ENCODE measurements at regions of chr17 and their contacts with region 1.

Region 1: GRCh38 chr17:53032861-53033271 is 789.9 kb upstream of the KIF2B start:
- DNase-seq: peak; percentile 88
- H3K4me3 ChIP-seq: no peak overlapping the region
- H3K27ac ChIP-seq: no peak overlapping the region
- H3K4me1 ChIP-seq: peaks cover 4% of the 10 kb centered on the region
- H3K27me3 ChIP-seq: no peaks in the 10 kb centered on the region
- CTCF ChIP-seq: peak; percentile 62 to 73
- POLR2A ChIP-seq: no peak

Region 2: GRCh38 chr17:51764387-51764972 is 1268.4 kb before region 1 on chr17:
- CTCF ChIA-PET with region 1: no interaction called
- POLR2A ChIA-PET with region 1: no interaction called
- dilution Hi-C with region 1: no loop called
- intact Hi-C with region 1: loop called (anchors 5 kb)
- DNase-seq: peak; percentile 36
- H3K4me3 ChIP-seq: no peak overlapping the region
- H3K27ac ChIP-seq: no peak overlapping the region
- H3K4me1 ChIP-seq: no peaks in the 10 kb centered on the region
- H3K27me3 ChIP-seq: no peaks in the 10 kb centered on the region
- CTCF ChIP-seq: peak; percentile 72 to 75
- POLR2A ChIP-seq: no peak

Region 3: DNA sequence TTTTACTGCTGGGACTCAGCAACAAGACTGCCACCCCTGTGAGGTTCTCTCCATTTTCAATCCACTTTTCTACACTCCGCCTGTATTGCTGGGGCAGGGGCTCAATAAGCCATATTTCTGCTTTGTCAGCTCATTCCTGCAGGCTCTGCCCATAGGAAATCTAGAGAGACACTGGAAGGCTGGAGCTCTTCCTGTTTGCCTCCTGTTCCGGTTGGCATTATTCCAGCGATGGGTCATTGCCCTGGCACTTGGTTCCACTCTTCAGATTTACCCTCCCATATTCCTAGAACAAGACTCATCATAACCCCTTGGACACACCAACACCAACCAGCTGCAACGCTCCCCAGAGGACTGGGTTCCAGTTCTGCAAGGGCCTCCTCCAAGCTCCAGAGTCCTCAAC is 1084.7 kb before region 1 on chr17:
- CTCF ChIA-PET with region 1: no interaction called
- POLR2A ChIA-PET with region 1: no interaction called
- dilution Hi-C with region 1: no loop called
- intact Hi-C with region 1: no loop called
- DNase-seq: no peak
- H3K4me3 ChIP-seq: no peak overlapping the region
- H3K27ac ChIP-seq: no peak overlapping the region
- H3K4me1 ChIP-seq: no peaks in the 10 kb centered on the region
- H3K27me3 ChIP-seq: no peaks in the 10 kb centered on the region
- CTCF ChIP-seq: no peak
- POLR2A ChIP-seq: no peak

Region 4: GRCh38 chr17:52776234-52776633 is 256.6 kb before region 1 on chr17:
- CTCF ChIA-PET with region 1: no interaction called
- POLR2A ChIA-PET with region 1: no interaction called
- dilution Hi-C with region 1: no loop called
- intact Hi-C with region 1: no loop called
- DNase-seq: no peak
- H3K4me3 ChIP-seq: no peak overlapping the region
- H3K27ac ChIP-seq: no peak overlapping the region
- H3K4me1 ChIP-seq: peaks cover 6% of the 10 kb centered on the region
- H3K27me3 ChIP-seq: no peaks in the 10 kb centered on the region
- CTCF ChIP-seq: no peak
- POLR2A ChIP-seq: no peak

Region 5: GRCh38 chr17:53150101-53150698 is 117.3 kb after region 1 on chr17:
- CTCF ChIA-PET with region 1: interaction called, 4 read pairs
- POLR2A ChIA-PET with region 1: no interaction called
- dilution Hi-C with region 1: no loop called
- intact Hi-C with region 1: loop called (anchors 1 kb)
- DNase-seq: no peak
- H3K4me3 ChIP-seq: no peak overlapping the region
- H3K27ac ChIP-seq: no peak overlapping the region
- H3K4me1 ChIP-seq: no peaks in the 10 kb centered on the region
- H3K27me3 ChIP-seq: no peaks in the 10 kb centered on the region
- CTCF ChIP-seq: peak in 1 of 2 donors; percentile 35
- POLR2A ChIP-seq: no peak

Region 6: DNA sequence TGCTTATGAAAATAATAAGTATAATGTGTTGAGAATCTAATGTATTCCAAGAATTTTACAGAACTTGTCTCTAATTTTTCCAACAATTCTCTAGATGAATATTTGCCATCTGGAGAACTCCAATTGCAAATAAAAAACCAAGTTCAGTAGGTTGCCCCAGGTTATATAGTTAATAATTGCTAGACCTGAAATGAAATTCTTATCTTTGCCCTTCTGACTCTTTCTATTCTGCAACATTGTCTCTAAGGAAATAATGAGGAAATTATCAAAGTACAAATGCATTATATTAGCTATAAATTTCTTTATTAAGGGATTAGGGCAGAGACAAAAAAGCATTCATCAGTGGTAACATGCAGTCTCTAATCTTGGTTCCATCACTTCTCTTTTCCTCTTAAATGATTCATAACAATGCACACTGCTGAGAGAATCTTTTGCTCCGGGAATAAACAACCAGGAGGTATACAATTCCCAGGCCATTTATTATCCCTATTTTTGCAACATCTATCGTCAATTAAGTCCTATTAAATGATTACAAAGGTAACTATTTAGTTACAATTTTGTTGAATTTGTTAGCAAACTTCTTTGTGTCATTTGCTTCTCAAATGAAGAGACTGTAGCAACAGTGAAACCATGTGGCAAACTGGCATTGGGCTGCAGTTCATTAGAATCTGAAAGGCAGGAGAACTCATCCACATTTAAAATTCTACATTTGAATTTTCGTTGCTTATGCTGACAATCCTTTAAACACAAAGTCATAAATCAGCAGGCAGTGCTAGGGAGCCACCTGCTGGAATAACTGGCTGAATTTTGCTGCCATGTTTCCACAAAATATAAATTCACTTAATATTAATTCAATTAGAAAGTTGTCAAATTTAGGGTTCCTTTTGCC is 1139.5 kb after region 1 on chr17:
- CTCF ChIA-PET with region 1: no interaction called
- POLR2A ChIA-PET with region 1: no interaction called
- dilution Hi-C with region 1: no loop called
- intact Hi-C with region 1: loop called (anchors 2 kb)
- DNase-seq: no peak
- H3K4me3 ChIP-seq: no peak overlapping the region
- H3K27ac ChIP-seq: no peak overlapping the region
- H3K4me1 ChIP-seq: no peaks in the 10 kb centered on the region
- H3K27me3 ChIP-seq: no peaks in the 10 kb centered on the region
- CTCF ChIP-seq: no peak
- POLR2A ChIP-seq: no peak

Region 7: DNA sequence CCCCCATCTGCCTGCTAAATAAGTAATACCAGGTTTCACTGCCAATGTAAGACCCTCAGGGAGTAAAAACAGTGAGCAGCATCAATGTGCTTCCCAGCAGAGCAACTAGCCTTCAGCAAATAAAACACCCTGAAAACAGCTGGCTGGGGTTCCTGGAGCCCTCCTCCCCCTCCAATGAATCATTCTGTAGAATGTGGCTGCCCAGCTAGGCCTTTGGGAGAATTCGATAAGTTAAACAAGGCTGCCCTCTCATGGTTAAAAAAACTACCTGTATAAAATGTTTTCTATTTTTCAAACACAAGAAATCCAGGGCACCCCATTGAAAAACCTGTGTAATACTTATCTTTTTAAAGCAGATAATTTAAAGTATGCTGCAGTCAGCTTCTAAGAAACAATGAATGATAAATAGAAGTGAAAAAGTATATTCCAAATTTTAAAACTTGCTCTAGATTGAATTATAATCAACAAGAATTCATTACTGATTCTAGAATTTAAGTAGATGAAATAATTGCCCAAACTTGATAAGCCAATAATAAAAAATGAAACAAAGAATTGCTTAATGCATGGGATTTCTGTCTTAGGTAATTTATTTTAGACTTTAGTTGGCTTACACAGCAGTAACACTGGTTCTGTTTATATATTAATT is 1858.4 kb after region 1 on chr17:
- CTCF ChIA-PET with region 1: interaction called, 20 read pairs
- POLR2A ChIA-PET with region 1: no interaction called
- dilution Hi-C with region 1: no loop called
- intact Hi-C with region 1: loop called (anchors 1 kb)
- DNase-seq: peak; percentile 37
- H3K4me3 ChIP-seq: no peak overlapping the region
- H3K27ac ChIP-seq: no peak overlapping the region
- H3K4me1 ChIP-seq: no peaks in the 10 kb centered on the region
- H3K27me3 ChIP-seq: no peaks in the 10 kb centered on the region
- CTCF ChIP-seq: peak in 1 of 2 donors; percentile 11
- POLR2A ChIP-seq: no peak

Region 8: GRCh38 chr17:54968262-54968987 is 1935.6 kb after region 1 on chr17 and contains the starts of genes COX11 and STXBP4:
- CTCF ChIA-PET with region 1: no interaction called
- POLR2A ChIA-PET with region 1: no interaction called
- dilution Hi-C with region 1: no loop called
- intact Hi-C with region 1: loop called (anchors 1 kb)
- DNase-seq: peak; percentile 98
- H3K4me3 ChIP-seq: peak within 1 kb of the TSS; percentile 43 to 94 (median 80)
- H3K27ac ChIP-seq: peak within 1 kb of the TSS; percentile 52
- H3K4me1 ChIP-seq: peaks cover 19% of the 10 kb centered on the region
- H3K27me3 ChIP-seq: no peaks in the 10 kb centered on the region
- CTCF ChIP-seq: peak in 1 of 2 donors; percentile 39
- POLR2A ChIP-seq: peak; percentile 93
- total RNA-seq, gene COX11: 55.6 and 55.9 TPM in 2 replicates
- total RNA-seq, gene STXBP4: 11.3 and 12.9 TPM in 2 replicates

Region 9: DNA sequence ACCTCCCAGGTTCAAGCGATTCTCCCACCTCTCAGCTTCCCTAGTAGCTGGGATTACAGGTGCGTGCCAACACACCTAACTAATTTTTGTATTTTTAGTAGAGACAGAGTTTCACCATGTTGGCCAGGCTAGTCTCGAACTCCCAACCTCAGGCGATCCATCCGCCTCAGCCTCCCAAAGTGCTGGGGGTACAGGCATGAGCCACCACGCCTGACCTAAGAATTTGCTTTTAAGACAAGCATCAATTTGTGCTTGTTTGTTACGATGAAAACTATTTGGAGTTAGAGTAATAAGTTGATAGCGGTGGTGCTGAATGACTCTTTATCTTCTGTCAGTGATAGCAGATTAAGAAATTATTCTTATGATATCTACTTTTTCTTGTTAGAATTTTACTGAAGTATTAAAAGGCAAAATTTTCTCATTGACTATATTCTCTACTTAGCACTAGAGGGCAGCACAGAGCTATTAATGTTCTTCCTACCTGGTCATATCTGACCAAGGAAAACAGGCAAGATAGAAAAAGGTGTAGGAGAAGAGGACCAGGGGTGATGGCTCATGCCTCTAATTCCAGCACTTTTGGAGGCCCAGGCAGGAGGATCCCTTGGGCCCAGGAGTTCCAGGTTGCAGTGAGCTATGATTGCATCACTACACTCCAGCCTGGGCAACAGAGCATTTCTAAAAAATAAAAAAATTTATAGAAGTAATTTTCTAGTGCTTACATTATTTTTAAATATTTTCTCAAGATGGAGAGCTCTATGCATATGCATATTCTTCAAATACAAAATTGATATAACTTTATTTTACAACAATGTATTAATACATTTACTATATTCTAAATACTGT is 1960.2 kb after region 1 on chr17:
- CTCF ChIA-PET with region 1: no interaction called
- POLR2A ChIA-PET with region 1: no interaction called
- dilution Hi-C with region 1: no loop called
- intact Hi-C with region 1: loop called (anchors 10 kb)
- DNase-seq: peak; percentile 43
- H3K4me3 ChIP-seq: no peak overlapping the region
- H3K27ac ChIP-seq: no peak overlapping the region
- H3K4me1 ChIP-seq: no peaks in the 10 kb centered on the region
- H3K27me3 ChIP-seq: no peaks in the 10 kb centered on the region
- CTCF ChIP-seq: peak; percentile 39 to 40
- POLR2A ChIP-seq: no peak

Measured in endothelial cell of umbilical vein (primary cell).